PC-9 (cell line): ENCODE measurements at regions of chr2 and their contacts with region 1.

Region 1: DNA sequence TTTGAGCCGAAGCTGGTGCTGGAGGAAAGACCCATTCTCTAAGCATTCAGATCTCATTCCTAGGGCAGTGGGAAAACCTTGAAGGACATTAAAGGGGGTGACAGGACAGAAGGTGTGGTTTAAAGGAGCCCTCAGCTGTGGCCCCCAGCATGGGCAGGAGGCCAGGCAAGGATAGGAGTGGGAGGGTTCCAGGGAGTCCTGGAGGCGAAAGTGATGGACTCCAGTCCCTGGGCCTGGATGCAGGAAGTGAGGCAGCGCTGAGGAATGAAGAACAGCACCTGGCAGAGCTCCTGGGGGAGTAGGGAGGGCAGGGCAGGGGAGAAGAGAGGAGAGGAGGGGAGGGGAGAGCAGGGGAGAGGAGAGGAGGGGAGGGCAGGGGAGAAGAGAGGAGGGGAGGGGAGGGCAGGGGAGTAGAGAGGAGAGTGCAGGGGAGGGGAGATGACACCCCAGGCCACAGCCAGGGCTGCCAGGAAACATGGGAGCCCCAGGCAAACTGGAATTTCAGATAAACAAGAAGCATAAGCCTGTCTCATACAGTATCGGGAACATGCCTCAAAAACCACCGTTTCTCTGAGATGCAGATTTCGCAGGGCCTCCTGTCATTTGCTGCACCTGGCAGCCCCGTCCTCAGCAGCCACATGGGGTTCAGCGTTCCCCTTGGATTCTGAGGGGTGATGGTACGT is 5.7 kb downstream of the RAMP1 start:
- DNase-seq: peak; percentile 85 to 87
- H3K4me3 ChIP-seq: peak overlapping the region; percentile 12; the same call in 1 of the 2 replicates
- H3K27ac ChIP-seq: peak overlapping the region; percentile 82
- H3K4me1 ChIP-seq: peaks cover 99% of the 10 kb centered on the region
- H3K27me3 ChIP-seq: no peaks in the 10 kb centered on the region
- CTCF ChIP-seq: no peak

Region 2: DNA sequence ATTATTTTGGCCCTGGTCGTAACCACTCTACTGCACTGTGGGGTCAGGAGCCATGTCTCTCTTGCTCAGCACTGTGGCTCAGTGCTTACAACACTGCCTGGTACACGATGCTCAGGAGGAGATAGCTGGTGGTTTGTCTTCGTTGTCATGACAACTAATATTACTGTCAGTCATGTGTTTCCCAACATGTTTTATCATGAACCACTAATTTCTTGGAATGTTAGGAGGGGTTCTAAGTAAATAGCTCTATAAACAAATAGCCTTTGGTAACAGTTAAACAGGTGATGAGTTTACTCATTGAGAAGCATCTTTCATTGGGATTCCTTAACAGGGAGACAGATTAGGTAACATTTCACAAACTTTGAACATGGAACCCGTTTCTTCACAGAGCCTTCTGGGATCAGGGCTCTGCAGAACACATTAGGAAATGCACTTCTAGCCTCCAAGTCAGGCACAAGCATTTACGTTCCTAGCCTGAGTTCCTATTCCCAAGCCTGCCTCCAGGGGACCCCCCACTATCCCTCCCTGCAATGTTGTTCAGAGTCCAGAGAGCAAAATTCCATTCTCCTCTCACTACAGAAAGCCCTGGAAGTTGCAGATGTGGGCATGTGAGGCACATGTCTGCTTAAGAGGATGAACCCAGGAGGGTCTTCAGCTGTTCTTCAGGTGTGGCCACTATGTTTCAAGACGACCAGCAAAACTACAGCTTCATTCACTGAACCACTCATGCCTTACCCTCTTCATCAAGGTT is 72.9 kb before region 1 on chr2:
- CTCF ChIA-PET with region 1: no interaction called
- POLR2A ChIA-PET with region 1: no interaction called
- intact Hi-C with region 1: no loop called
- DNase-seq: peak in 1 of 2 experiments; percentile 59
- H3K4me3 ChIP-seq: no peak overlapping the region
- H3K27ac ChIP-seq: no peak overlapping the region
- H3K4me1 ChIP-seq: no peaks in the 10 kb centered on the region
- H3K27me3 ChIP-seq: no peaks in the 10 kb centered on the region
- CTCF ChIP-seq: no peak; the same call in 1 of the 2 replicates

Region 3: DNA sequence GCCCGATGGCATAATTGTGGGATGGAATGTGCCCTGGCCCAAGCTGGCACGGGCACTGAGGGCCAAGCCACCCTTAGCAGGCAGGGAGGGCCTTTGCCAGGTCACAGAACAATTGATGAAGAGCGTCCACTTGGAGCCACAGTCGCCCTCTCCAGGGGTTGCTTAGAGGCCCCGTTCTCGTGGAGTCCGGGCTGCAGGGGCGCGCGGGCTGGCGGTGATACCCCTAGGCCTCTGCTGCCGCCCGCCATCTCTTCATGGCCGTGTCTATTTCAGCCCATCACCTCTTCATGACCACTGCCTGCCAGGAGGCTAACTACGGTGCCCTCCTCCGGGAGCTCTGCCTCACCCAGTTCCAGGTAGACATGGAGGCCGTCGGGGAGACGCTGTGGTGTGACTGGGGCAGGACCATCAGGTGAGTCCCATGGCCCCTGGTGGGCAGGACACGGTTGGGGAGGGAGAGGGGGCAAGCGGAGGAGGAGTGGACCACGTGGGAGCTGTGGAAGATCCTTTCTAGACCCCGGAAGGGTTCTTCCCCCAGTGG is 11.9 kb after region 1 on chr2:
- CTCF ChIA-PET with region 1: interaction called, 3 read pairs
- POLR2A ChIA-PET with region 1: interaction called, 17 read pairs
- intact Hi-C with region 1: no loop called
- DNase-seq: no peak
- H3K4me3 ChIP-seq: no peak overlapping the region
- H3K27ac ChIP-seq: no peak overlapping the region
- H3K4me1 ChIP-seq: peaks cover 44% of the 10 kb centered on the region
- H3K27me3 ChIP-seq: no peaks in the 10 kb centered on the region
- CTCF ChIP-seq: no peak

Region 4: DNA sequence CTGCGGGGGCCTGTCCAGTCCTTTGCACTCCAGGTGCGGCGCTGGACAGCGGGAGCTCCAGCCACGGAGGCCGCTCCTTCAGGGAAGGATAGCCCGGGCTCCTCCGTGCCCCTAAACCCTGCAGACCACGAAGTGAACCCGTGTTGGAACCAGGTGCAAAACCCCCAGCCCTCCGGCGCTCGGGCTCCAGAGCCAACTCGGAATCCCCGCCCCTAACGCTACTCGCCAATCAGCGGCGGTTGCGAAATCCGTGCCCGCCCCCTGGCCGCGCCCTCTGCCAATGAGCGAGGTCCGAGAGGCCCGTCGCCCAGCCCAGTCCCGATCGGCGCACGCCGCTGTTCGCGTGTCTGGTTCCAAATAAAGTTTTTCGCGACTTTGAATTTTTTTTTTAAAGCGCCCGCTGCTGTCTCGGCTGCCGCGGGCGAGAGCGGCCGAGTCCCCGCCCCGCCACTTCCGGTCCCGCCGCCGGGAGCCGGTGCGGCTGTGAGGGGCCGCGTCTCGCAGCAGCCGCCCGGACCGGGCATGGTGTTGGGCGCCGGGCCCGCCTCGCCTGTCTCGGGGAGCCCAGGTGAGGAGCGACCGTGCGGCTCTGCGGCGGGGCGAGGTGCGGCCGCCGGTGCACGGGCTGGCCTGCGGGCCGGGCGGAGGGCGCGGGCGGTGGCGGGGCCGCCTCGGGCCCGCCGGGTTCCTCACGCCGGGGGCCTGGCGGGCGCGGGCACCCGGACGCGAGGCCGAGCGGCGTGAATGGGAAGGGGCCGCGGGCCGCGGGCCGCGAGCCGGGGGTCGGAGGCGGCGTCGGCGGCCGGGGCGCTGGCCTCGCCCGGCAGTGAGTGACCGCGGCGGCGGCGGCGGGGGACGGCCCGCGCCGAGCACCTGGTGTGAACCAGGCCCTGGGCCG is 101.7 kb after region 1 on chr2 and contains the start of gene UBE2F:
- CTCF ChIA-PET with region 1: no interaction called
- POLR2A ChIA-PET with region 1: interaction called, 4 read pairs
- intact Hi-C with region 1: loop called (anchors 2 kb)
- DNase-seq: peak; percentile 92 to 100
- H3K4me3 ChIP-seq: peak within 1 kb of the TSS; percentile 96
- H3K27ac ChIP-seq: peak within 1 kb of the TSS; percentile 91
- H3K4me1 ChIP-seq: peaks cover 45% of the 10 kb centered on the region
- H3K27me3 ChIP-seq: no peaks in the 10 kb centered on the region
- CTCF ChIP-seq: no peak
- total RNA-seq, gene UBE2F: 76.7 and 103 TPM in 2 replicates

Region 5: GRCh38 chr2:238139196-238140039 is 274.3 kb after region 1 on chr2:
- CTCF ChIA-PET with region 1: no interaction called
- POLR2A ChIA-PET with region 1: no interaction called
- intact Hi-C with region 1: loop called (anchors 2 kb)
- DNase-seq: peak in 1 of 2 experiments; percentile 64
- H3K4me3 ChIP-seq: no peak overlapping the region
- H3K27ac ChIP-seq: no peak overlapping the region
- H3K4me1 ChIP-seq: peaks cover 64% of the 10 kb centered on the region
- H3K27me3 ChIP-seq: no peaks in the 10 kb centered on the region
- CTCF ChIP-seq: peak; percentile 47